ENCODE measurements at regions of chr1 and their contacts with region 1.

Region 1: GRCh38 chr1:161486806-161487741 is 18.2 kb upstream of the FCGR2A start:
- DNase-seq: peak; percentile 39 to 46
- H3K4me3 ChIP-seq: no peak overlapping the region
- H3K27ac ChIP-seq: no peak overlapping the region
- H3K4me1 ChIP-seq: no peaks in the 10 kb centered on the region
- H3K27me3 ChIP-seq: peaks cover 25% of the 10 kb centered on the region
- CTCF ChIP-seq: peak; percentile 87

Region 2: GRCh38 chr1:161531986-161532643 is 45.0 kb after region 1 on chr1:
- CTCF ChIA-PET with region 1: interaction called, 14 read pairs
- POLR2A ChIA-PET with region 1: no interaction called
- intact Hi-C with region 1: no loop called
- DNase-seq: no peak
- H3K4me3 ChIP-seq: peak overlapping the region; percentile 66; the same call in 1 of the 2 replicates
- H3K27ac ChIP-seq: peak overlapping the region; percentile 77
- H3K4me1 ChIP-seq: peaks cover 9% of the 10 kb centered on the region; the same call in 1 of the 2 replicates
- H3K27me3 ChIP-seq: no peaks in the 10 kb centered on the region
- CTCF ChIP-seq: no peak

Measured in PC-9 (cell line).